ENCODE measurements at regions of chr5 and their contacts with region 1.

Region 1: GRCh38 chr5:37323607-37324006 is 47.3 kb downstream of the NUP155 start:
- DNase-seq: no peak
- ATAC-seq: no peak
- H3K4me3 ChIP-seq: no peak overlapping the region
- H3K4me3 Mint-ChIP-seq: no peak overlapping the region
- H3K27ac ChIP-seq: no peak overlapping the region
- H3K27ac Mint-ChIP-seq: no peak overlapping the region
- H3K4me1 ChIP-seq: no peaks in the 10 kb centered on the region
- H3K4me1 Mint-ChIP-seq: peaks cover 2% of the 10 kb centered on the region
- H3K27me3 ChIP-seq: no peaks in the 10 kb centered on the region
- H3K27me3 Mint-ChIP-seq: no peaks in the 10 kb centered on the region
- CTCF ChIP-seq: no peak

Region 2: GRCh38 chr5:37029436-37029835 is 294.2 kb before region 1 on chr5:
- CTCF ChIA-PET with region 1: no interaction called
- POLR2A ChIA-PET with region 1: no interaction called
- intact Hi-C with region 1: loop called (anchors 10 kb)
- DNase-seq: no peak
- ATAC-seq: no peak
- H3K4me3 ChIP-seq: no peak overlapping the region
- H3K4me3 Mint-ChIP-seq: no peak overlapping the region
- H3K27ac ChIP-seq: no peak overlapping the region
- H3K27ac Mint-ChIP-seq: no peak overlapping the region
- H3K4me1 ChIP-seq: no peaks in the 10 kb centered on the region
- H3K4me1 Mint-ChIP-seq: peaks cover 2% of the 10 kb centered on the region
- H3K27me3 ChIP-seq: no peaks in the 10 kb centered on the region
- H3K27me3 Mint-ChIP-seq: no peaks in the 10 kb centered on the region
- CTCF ChIP-seq: no peak

Region 3: GRCh38 chr5:37575541-37576489 is 252.2 kb after region 1 on chr5:
- CTCF ChIA-PET with region 1: no interaction called
- POLR2A ChIA-PET with region 1: no interaction called
- intact Hi-C with region 1: no loop called
- DNase-seq: no peak
- ATAC-seq: no peak
- H3K4me3 ChIP-seq: no peak overlapping the region
- H3K4me3 Mint-ChIP-seq: no peak overlapping the region
- H3K27ac ChIP-seq: no peak overlapping the region
- H3K27ac Mint-ChIP-seq: no peak overlapping the region
- H3K4me1 ChIP-seq: peaks cover 5% of the 10 kb centered on the region
- H3K4me1 Mint-ChIP-seq: peaks cover 20% of the 10 kb centered on the region
- H3K27me3 ChIP-seq: no peaks in the 10 kb centered on the region
- H3K27me3 Mint-ChIP-seq: no peaks in the 10 kb centered on the region
- CTCF ChIP-seq: no peak

Region 4: GRCh38 chr5:38968665-38969064 is 1645.1 kb after region 1 on chr5:
- CTCF ChIA-PET with region 1: no interaction called
- POLR2A ChIA-PET with region 1: no interaction called
- intact Hi-C with region 1: loop called in 1 of 2 experiments (anchors 10 kb)
- DNase-seq: no peak
- ATAC-seq: no peak
- H3K4me3 ChIP-seq: no peak overlapping the region
- H3K4me3 Mint-ChIP-seq: no peak overlapping the region
- H3K27ac ChIP-seq: no peak overlapping the region
- H3K27ac Mint-ChIP-seq: no peak overlapping the region
- H3K4me1 ChIP-seq: no peaks in the 10 kb centered on the region
- H3K4me1 Mint-ChIP-seq: no peaks in the 10 kb centered on the region
- H3K27me3 ChIP-seq: no peaks in the 10 kb centered on the region
- H3K27me3 Mint-ChIP-seq: no peaks in the 10 kb centered on the region
- CTCF ChIP-seq: no peak

Measured in CD8-positive, alpha-beta T cell (primary cell).